Prostate gland (tissue), 2 donors: ENCODE measurements at regions of chr1 and their contacts with region 1.

Region 1: GRCh38 chr1:42456010-42456758 is at the starts of genes PPCS and ZMYND12:
- DNase-seq: peak; percentile 83
- H3K4me3 ChIP-seq: peak within 1 kb of the TSS; percentile 88 to 97
- H3K27ac ChIP-seq: peak within 1 kb of the TSS; percentile 87 to 92
- H3K4me1 ChIP-seq: peaks cover 5% of the 10 kb centered on the region
- H3K27me3 ChIP-seq: no peaks in the 10 kb centered on the region
- CTCF ChIP-seq: peak in 2 of 4 experiments; percentile 38 to 46
- POLR2A ChIP-seq: peak; percentile 60
- total RNA-seq, gene PPCS: 71.2 to 101 TPM
- total RNA-seq, gene ZMYND12: 2.0 to 12.7 TPM

Region 2: GRCh38 chr1:42290130-42290529 is 166.1 kb before region 1 on chr1:
- intact Hi-C with region 1: no loop called
- DNase-seq: no peak
- H3K4me3 ChIP-seq: no peak overlapping the region
- H3K27ac ChIP-seq: no peak overlapping the region
- H3K4me1 ChIP-seq: no peaks in the 10 kb centered on the region
- H3K27me3 ChIP-seq: no peaks in the 10 kb centered on the region
- CTCF ChIP-seq: no peak
- POLR2A ChIP-seq: no peak

Region 3: DNA sequence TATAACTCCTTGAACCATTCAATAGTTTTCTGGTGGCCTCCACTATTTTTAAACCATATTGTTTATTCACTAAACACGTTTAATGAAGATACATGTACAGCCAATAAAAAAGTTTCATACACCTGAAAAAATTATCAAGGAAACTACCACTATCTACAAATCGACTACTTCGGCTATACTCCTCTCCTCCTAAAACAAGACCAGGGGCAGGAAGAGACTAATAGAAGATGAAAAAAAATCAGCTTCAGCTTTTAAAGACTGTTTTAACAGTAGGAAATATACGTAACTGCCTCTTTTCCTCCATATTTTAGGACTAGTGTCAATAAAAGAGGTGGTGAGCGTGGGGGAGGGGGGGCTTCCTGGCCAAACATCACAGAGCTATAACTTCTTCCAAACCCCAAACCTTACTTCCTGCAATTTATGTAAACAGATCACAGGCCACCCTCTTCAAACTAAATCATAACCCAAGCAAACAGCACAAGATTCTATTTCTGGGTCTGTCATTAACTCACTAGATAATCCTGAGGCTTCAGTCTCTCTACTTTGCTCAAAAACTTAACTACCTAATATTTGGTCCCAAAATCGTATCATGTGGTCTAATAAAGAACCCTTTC is 136.2 kb before region 1 on chr1:
- intact Hi-C with region 1: loop called (anchors 5 kb)
- DNase-seq: no peak
- H3K4me3 ChIP-seq: no peak overlapping the region
- H3K27ac ChIP-seq: no peak overlapping the region
- H3K4me1 ChIP-seq: peaks cover 17% of the 10 kb centered on the region
- H3K27me3 ChIP-seq: no peaks in the 10 kb centered on the region
- CTCF ChIP-seq: no peak
- POLR2A ChIP-seq: no peak

Region 4: DNA sequence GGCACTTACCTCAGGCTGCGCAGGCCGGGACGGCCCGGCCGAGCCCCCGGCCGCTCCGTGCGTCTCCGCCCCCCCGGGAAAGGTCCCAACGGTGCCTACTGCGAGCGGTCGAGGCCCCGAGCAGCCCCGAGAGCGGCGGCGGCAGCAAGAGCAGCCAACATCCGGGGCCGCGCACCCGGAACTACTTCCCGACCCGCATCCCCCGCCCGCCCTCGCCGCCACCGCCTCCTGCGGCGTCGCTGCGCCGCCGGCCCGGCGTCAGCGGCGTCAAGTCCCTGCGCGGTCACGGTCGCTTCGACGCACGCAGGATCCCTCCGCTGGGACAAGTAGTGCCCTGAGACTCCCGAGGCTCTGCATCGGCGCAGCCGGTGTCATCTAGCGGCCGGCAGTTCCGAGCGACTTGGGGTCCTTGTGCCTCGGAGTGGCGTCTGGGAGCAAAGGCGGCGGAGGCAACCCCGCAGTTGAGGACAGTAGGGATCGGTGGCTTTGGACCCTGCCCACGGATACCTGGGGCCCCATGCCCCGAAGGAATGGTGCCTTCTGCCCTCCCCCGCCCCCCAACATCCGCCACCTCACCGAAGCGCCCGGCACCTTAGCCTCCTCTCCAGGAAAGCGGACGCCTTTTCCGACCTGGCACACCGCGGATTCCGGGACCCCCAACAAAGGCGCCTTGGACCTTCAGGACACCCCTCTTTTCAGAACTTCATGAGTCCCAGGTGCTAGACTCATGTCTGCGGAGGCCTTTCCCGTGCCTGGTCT is 121.0 kb before region 1 on chr1 and contains the start of gene FOXJ3:
- intact Hi-C with region 1: loop called (anchors 5 kb)
- DNase-seq: peak; percentile 92
- H3K4me3 ChIP-seq: peak within 1 kb of the TSS; percentile 95 to 98
- H3K27ac ChIP-seq: peak within 1 kb of the TSS; percentile 94 to 96
- H3K4me1 ChIP-seq: peaks cover 4% of the 10 kb centered on the region
- H3K27me3 ChIP-seq: no peaks in the 10 kb centered on the region
- CTCF ChIP-seq: peak in 2 of 4 experiments; percentile 21 to 42
- POLR2A ChIP-seq: peak; percentile 54
- total RNA-seq, gene FOXJ3: 54.1 to 58.5 TPM